Cardiac septum (tissue), 1 donor: ENCODE measurements at regions of chr1 and their contacts with region 1.

Region 1: DNA sequence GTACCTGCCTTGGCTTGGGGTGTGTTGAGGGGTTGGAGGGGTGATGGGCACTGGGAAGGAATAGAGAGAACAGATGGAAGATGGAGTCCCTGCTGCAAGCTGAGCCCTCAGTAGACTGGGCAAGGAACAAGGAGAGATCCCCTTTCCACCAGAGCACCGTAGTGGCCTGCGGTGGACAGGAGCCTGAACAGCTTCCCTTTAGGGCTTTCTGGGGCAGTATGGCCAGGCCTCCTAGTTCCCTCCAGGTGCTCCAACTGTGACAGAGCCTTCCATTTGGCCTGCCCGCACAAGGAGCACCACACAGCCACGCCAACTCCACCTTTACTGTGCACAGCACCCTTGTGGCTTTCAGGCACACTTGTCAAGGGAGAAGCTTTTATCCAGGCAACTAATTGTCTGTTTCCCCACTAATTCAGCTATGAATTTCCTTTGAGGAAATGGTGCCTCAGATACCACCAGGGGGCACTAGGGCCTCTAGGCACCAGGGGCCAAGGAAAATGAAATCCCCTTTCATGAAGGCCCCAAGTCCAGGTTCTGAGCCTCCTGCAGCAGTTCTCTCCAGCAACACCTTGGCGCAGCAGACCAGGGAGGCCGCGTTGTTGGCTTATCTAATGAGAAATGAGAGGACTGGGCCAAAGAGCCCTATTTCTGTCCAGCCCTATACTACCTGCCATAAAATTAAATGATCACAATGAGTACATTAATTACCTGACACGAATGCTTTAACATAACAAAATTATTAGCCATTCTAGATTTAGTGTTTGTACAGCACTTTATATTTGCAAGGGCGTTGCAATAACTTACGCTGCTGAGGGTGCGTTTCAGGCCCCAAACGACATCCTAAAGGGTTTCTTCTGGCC is 23.1 kb upstream of the ERI3 start:
- DNase-seq: no peak

Region 2: GRCh38 chr1:44472620-44473525 is 94.7 kb after region 1 on chr1:
- intact Hi-C with region 1: no loop called
- DNase-seq: no peak

Region 3: GRCh38 chr1:44500181-44501046 is 122.3 kb after region 1 on chr1:
- intact Hi-C with region 1: loop called (anchors 2 kb)
- DNase-seq: no peak

Region 4: DNA sequence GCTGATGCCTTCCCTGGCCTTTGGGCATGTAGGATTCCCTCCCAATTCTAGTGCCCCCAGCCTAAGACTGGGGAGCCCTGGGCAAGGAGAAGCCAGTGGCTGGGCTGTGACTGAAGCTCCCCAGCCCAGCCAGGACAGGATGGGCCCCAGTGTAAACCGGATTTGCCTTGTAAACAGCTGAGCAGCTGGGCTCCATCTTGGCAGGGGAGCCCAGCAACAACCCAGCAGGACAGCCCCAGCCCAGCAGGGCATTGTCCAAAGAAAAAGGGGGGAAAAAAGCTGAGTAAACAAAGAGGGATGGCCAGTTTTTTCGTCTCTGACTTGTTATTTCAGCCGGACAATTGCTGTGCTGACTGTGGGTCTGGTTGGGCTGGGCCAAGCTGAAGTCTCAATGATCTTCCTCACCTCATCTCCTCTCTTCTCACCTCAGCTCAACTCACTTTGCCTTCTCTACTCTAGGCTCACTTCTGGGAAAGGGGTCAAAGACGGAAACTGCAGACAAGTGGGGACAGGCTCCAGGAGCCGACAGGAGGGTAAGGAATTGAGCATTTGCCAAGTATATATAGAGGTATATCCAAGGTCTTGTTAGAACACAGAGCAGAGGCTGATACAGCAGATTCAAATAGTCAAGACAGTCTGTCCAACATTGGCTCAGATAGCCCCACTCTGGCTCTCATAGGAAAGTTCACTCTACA is 198.4 kb after region 1 on chr1:
- intact Hi-C with region 1: loop called (anchors 5 kb)
- DNase-seq: no peak

Region 5: GRCh38 chr1:44594871-44595746 is 217.0 kb after region 1 on chr1:
- intact Hi-C with region 1: loop called (anchors 2 kb)
- DNase-seq: peak; percentile 93

Region 6: DNA sequence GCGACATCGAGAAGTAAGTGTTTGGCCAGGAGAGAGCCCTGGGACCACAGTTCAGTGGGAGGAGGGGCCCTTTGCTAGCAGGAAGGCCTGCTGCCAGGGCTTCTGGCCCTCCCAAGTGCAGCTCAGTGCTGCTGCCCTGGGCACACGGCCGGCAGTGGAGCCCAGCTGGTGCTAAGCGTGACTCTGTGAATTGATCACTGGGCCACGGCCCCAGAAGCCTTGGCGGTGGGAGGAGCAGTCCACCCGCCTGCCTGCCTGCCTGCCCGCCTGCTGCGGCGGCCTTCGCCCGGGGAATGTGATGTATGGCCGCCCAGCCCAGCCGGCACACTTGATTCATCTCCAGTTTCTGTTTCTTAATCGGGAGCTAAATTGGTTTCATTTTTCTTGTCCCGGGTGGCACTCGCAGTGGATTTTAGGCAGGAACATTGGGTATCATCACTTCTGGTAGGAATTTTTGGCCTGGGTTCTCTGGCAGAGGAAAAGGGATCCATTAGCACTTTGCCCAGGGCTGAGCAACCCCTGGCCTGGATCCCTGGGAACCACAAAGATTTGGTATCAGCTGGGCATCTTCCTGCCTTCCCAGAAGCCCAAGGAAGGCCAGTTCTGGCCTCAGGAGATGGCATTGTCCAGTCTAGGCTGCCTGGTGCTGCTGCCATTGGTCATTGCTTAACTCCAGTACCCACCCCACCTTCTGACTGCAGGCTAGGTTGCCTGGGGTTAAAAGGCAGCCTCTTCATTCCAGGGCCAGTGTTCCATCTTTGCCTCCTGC is 267.5 kb after region 1 on chr1:
- intact Hi-C with region 1: loop called (anchors 5 kb)
- DNase-seq: no peak